ENCODE measurements at regions of chr16 and their contacts with region 1.

Region 1: DNA sequence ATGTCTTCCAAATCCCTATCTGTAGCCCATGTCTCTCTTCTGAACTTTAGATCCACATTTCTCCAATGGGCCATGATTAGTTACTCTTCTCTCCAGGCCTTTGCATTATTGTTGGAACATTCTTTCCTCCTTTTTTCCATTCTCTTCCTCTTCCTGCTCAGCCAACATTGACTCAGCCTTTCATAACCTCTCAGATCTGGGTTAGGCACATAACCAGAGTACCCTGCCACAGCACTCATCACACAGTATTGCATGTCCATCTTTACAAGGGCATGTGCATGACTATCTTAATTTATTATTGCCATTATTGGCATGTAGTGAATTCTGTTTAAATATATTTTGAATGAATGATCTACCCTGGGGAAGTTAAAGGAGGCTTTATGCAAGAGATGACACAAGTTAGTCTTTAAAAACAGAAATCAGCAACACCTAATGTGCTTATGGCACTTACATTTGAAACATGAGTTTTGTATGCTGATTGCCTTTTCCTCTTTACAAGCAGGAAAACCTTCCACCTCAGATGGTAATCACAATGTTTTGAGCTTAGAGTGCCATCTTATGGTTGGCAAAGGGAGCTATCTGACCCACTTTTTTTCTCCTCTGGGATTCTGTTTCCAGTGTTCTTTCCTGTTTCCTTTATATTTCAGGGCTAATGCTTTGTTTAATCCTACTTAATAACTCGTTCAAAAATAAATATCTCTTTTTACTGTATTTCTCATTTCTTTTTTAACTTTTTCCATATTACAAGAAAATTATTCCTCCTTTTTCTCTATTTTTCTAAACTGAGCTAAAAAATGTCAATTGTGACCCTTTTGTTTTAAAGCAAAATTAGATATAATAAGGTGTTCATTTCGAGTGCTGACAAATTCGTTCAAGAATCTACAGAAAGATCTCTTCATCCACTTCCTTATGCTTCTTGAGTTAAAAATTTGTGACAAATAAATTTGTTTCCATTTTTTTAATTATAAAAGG is 151.0 kb upstream of the RBL2 start:
- DNase-seq: peak in 1 of 4 donors; percentile 37
- ATAC-seq: peak; percentile 78
- H3K4me3 ChIP-seq: no peak overlapping the region
- H3K27ac ChIP-seq: peak overlapping the region in 1 of 2 donors; percentile 17
- H3K4me1 ChIP-seq: peaks cover 4 to 15% of the 10 kb centered on the region in 2 donors
- H3K27me3 ChIP-seq: no peaks in the 10 kb centered on the region
- CTCF ChIP-seq: peak; percentile 28 to 30

Region 2: DNA sequence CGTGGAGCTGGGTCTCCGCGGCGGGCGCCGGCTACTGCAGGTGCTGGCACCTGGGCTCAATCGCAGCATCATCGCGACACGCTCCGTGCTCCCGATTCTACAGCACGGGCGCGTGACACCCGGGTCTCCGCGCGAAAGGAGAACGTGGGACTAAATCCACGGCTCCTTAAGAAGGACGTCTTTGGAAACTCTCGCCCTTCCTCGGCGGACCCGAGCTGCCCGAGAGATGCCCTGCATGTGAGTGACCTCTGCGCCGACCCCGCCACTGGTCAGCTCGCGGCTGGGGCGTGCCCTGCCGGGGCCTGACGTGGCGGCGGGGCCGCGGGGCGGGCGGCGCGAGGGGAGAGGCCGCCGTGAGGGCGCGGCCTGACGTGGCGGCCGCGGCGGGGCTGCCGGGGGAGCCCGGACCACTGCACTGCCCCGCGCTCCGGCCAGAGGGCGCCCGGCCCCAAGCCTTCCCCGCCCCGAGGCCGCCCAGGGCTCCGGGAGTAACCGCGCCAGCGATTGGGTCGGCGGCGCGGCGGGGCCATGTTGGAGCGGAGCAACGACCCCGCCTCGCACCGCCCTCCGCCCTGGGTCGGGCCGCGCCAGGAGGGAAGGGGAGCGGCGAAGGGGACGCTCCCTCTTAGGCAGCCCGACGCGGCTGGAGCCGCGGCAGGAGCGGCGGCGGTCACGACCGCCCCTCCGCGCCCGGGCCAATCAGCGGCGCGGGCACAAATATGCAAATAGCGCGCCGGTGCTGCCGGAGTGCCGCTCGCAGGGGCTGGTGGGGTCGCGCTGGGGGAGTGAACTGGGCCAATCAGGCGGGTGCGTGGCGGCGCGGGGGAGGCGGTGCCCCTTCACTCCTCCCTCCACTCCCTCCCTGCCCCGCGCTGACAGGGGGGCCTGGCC is 152.9 kb before region 1 on chr16:
- intact Hi-C with region 1: loop called in 1 of 2 experiments (anchors 5 kb)
- DNase-seq: peak; percentile 94 to 99 (median 98)
- ATAC-seq: peak; percentile 91
- H3K4me3 ChIP-seq: peak overlapping the region; percentile 69 to 78
- H3K27ac ChIP-seq: peak overlapping the region; percentile 93 to 97
- H3K4me1 ChIP-seq: peaks cover 0 to 38% of the 10 kb centered on the region in 2 donors
- H3K27me3 ChIP-seq: no peaks in the 10 kb centered on the region
- CTCF ChIP-seq: peak; percentile 30 to 68

Region 3: GRCh38 chr16:53415504-53415903 is 132.2 kb after region 1 on chr16:
- intact Hi-C with region 1: no loop called
- DNase-seq: peak in 1 of 4 donors; percentile 6
- ATAC-seq: peak; percentile 82
- H3K4me3 ChIP-seq: no peak overlapping the region
- H3K27ac ChIP-seq: no peak overlapping the region
- H3K4me1 ChIP-seq: peaks cover 0 to 3% of the 10 kb centered on the region in 2 donors
- H3K27me3 ChIP-seq: no peaks in the 10 kb centered on the region
- CTCF ChIP-seq: no peak